HepG2 (cell line): ENCODE measurements at regions of chr2 and their contacts with region 1.

Region 1: DNA sequence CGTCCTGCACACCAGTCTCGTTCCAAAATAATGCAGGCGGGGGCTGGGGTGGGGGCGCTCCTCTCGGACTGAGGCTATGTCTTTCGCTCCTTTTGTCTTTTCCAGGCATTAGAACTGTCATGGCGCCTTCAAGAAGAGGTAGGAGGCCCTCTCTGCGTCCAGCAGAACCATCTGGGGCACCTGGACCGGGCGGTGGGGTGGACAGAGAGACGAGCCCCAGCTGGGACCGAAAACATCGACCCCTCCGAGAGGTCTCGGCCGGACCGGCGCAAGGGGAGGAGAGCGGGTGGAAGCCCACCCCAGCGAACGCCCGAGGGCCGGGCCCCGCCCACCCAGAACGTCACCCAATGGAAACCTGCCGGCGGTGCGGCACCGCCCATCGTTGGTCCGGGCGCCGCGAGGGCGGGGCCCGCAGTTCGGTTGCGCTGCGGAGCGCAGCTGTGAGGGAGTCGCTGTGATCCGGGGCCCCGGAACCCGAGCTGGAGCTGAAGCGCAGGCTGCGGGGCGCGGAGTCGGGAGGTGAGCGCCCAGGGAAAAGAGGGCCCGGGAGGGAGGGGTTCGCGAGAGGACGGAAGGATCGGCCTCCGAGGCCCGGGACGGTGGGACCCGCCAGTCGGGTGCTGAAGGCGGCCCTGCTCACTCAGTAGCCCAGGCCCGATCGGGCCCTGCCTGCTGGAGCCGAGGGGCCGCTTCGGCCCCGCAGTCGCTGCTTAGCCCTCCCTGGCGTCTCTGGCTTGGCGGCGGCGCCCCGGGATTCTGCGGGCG is at the start of gene NRBP1:
- DNase-seq: peak; percentile 91
- ATAC-seq: peak; percentile 90
- H3K4me3 ChIP-seq: peak within 1 kb of the TSS; percentile 86 to 100 (median 100)
- H3K27ac ChIP-seq: peak within 1 kb of the TSS; percentile 99
- H3K4me1 ChIP-seq: peaks cover 58% of the 10 kb centered on the region
- H3K27me3 ChIP-seq: no peaks in the 10 kb centered on the region; a peak in 1 of 5 replicates
- CTCF ChIP-seq: peak; percentile 52
- EP300 ChIP-seq: peak in 1 of 2 experiments; percentile 18; a peak in 2 of 4 replicates
- POLR2A ChIP-seq: peak; percentile 93 to 94
- RAD21 ChIP-seq: peak; percentile 64; the same call in 1 of the 2 replicates
- total RNA-seq, gene NRBP1: 165 and 222 TPM in 2 replicates

Region 2: DNA sequence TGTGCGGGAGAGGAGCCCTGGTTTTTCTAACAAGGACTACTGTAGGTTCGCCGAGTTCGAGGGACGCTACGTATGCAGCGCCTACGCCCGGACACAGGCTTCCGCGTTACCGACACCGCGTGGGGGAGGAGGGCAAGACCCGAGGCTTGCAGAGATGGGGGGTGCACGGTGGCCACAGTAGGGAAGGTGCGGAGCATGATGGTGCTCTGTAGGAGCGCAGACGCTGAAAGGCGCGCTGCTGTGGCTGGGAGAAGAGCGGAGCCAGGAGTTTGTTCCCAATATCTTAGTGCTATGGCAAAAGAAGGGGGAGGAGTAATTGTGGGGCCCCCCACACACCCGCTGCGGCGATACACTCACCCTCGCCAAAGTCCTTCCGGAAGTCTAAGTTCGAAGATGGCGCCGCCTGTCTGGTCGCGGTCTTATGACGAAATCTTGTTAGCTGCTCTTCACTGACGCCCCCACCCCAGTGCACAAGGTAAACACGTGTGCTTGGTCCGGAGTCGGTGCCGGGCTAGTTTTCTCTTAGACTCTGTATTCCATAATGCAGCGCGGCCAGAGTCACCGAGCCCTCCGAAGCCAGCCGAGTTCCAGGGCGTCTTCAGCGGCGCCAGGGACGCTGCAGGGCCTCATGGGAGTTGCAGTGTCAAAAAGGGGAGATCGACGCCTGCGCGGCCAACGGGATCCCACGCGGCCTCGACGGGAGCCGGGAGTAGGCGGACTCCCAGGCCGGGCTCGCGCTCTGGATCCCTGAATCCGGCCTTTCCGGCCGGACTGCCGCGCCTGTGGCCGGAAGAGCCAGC is 71.8 kb before region 1 on chr2 and contains the start of gene GTF3C2:
- CTCF ChIA-PET with region 1: no interaction called
- POLR2A ChIA-PET with region 1: interaction called, 10 read pairs
- in situ Hi-C with region 1: no loop called
- intact Hi-C with region 1: no loop called
- DNase-seq: peak; percentile 99
- ATAC-seq: peak; percentile 88
- H3K4me3 ChIP-seq: peak within 1 kb of the TSS; percentile 72 to 91 (median 85)
- H3K27ac ChIP-seq: peak within 1 kb of the TSS; percentile 96
- H3K4me1 ChIP-seq: peaks cover 64% of the 10 kb centered on the region
- H3K27me3 ChIP-seq: no peaks in the 10 kb centered on the region; a peak in 1 of 5 replicates
- CTCF ChIP-seq: 0 out of 2 replicates have a peak, but pooled peaks have one; percentile 25
- EP300 ChIP-seq: peak in 1 of 2 experiments; percentile 55; a peak in 3 of 4 replicates
- POLR2A ChIP-seq: peak; percentile 58 to 60
- RAD21 ChIP-seq: peak; percentile 45; the same call in 1 of the 2 replicates
- total RNA-seq, gene GTF3C2: 77.5 and 80.0 TPM in 2 replicates

Region 3: DNA sequence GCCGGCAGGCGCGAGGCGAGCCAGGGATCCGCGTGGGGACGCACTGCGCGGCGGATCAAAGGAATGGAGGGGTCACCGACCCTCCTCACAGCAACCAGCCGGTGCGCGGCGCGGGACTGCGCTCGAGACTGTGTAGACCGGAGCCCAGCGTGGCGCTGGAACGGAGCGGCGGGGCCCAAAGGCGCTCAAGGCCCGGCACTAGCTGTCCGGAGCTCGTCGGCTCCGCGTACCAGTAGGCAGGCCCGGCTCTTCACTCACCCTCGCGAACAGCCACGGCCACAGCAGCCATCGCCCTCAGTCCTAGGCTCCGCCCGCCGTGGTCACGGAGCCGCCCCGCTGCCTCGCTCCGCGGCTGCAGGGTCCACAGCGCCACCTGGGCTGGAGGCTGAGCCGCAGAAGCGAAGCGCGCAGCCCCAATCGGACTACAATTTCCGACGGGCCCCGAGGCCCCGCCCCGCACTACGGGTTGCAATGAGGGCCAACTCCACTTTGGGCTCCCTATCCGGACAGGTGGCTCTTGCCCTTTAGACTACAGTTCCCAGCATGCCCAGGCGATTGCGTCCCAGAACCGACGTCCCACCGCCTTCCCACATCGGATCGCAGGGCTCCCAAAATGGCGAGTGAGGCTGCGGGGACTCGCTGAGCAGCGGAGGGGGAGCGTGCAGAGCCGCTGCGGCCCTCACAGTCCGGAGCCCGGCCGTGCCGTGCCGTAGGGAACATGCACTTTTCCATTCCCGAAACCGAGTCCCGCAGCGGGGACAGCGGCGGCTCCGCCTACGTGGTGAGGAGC is 58.2 kb before region 1 on chr2 and contains the starts of genes EIF2B4 and SNX17:
- CTCF ChIA-PET with region 1: no interaction called
- POLR2A ChIA-PET with region 1: interaction called, 16 read pairs
- in situ Hi-C with region 1: no loop called
- intact Hi-C with region 1: loop called (anchors 1 kb)
- DNase-seq: peak; percentile 99
- ATAC-seq: peak; percentile 89
- H3K4me3 ChIP-seq: peak within 1 kb of the TSS; percentile 88 to 96 (median 95)
- H3K27ac ChIP-seq: peak within 1 kb of the TSS; percentile 83
- H3K4me1 ChIP-seq: peaks cover 41% of the 10 kb centered on the region
- H3K27me3 ChIP-seq: no peaks in the 10 kb centered on the region; a peak in 1 of 5 replicates
- CTCF ChIP-seq: peak; percentile 100
- EP300 ChIP-seq: peak; percentile 53 to 68
- POLR2A ChIP-seq: peak in 1 of 2 experiments; percentile 92; a peak in 2 of 4 replicates
- RAD21 ChIP-seq: peak; percentile 97
- total RNA-seq, gene EIF2B4: 91.5 and 105 TPM in 2 replicates
- total RNA-seq, gene SNX17: 94.9 and 109 TPM in 2 replicates

Region 4: GRCh38 chr2:27441958-27442919 is 13.8 kb after region 1 on chr2 and contains the start of gene KRTCAP3:
- CTCF ChIA-PET with region 1: no interaction called
- POLR2A ChIA-PET with region 1: interaction called, 11 read pairs
- in situ Hi-C with region 1: no loop called
- intact Hi-C with region 1: no loop called
- DNase-seq: no peak
- ATAC-seq: peak; percentile 10
- H3K4me3 ChIP-seq: no peak within 1 kb of the TSS
- H3K27ac ChIP-seq: no peak within 1 kb of the TSS
- H3K4me1 ChIP-seq: no peaks in the 10 kb centered on the region
- H3K27me3 ChIP-seq: no peaks in the 10 kb centered on the region
- CTCF ChIP-seq: no peak
- EP300 ChIP-seq: no peak
- POLR2A ChIP-seq: peak in 1 of 2 experiments; percentile 23; a peak in 1 of 4 replicates
- RAD21 ChIP-seq: no peak
- total RNA-seq, gene KRTCAP3: 2.1 TPM in 1 of 2 replicates, not detected in the other

Region 5: GRCh38 chr2:27489498-27490397 is 61.4 kb after region 1 on chr2 and contains the start of gene IFT172:
- CTCF ChIA-PET with region 1: no interaction called
- POLR2A ChIA-PET with region 1: interaction called, 4 read pairs
- in situ Hi-C with region 1: no loop called
- intact Hi-C with region 1: loop called (anchors 1 kb)
- DNase-seq: peak; percentile 100
- ATAC-seq: peak; percentile 91
- H3K4me3 ChIP-seq: peak within 1 kb of the TSS; percentile 69 to 79 (median 78)
- H3K27ac ChIP-seq: peak within 1 kb of the TSS; percentile 54
- H3K4me1 ChIP-seq: peaks cover 41% of the 10 kb centered on the region
- H3K27me3 ChIP-seq: no peaks in the 10 kb centered on the region; a peak in 1 of 5 replicates
- CTCF ChIP-seq: no peak
- EP300 ChIP-seq: no peak
- POLR2A ChIP-seq: peak; percentile 83 to 87
- RAD21 ChIP-seq: no peak; the same call in 1 of the 2 replicates
- total RNA-seq, gene IFT172: 17.0 and 21.6 TPM in 2 replicates

Region 6: GRCh38 chr2:27582695-27583389 is 154.4 kb after region 1 on chr2 and contains the start of gene ZNF512:
- CTCF ChIA-PET with region 1: no interaction called
- POLR2A ChIA-PET with region 1: interaction called, 16 read pairs
- in situ Hi-C with region 1: no loop called
- intact Hi-C with region 1: no loop called
- DNase-seq: peak; percentile 96
- ATAC-seq: peak; percentile 98
- H3K4me3 ChIP-seq: peak within 1 kb of the TSS; percentile 69 to 97 (median 87)
- H3K27ac ChIP-seq: peak within 1 kb of the TSS; percentile 57
- H3K4me1 ChIP-seq: peaks cover 50% of the 10 kb centered on the region
- H3K27me3 ChIP-seq: no peaks in the 10 kb centered on the region; a peak in 1 of 5 replicates
- CTCF ChIP-seq: peak; percentile 25; the same call in 1 of the 2 replicates
- EP300 ChIP-seq: no peak; a peak in 1 of 4 replicates
- POLR2A ChIP-seq: peak; percentile 87 to 88
- RAD21 ChIP-seq: 0 out of 2 replicates have a peak, but pooled peaks have one; percentile 41
- total RNA-seq, gene ZNF512: 31.0 and 38.1 TPM in 2 replicates

Region 7: GRCh38 chr2:27628767-27629709 is 200.6 kb after region 1 on chr2 and contains the starts of genes CCDC121 and GPN1:
- CTCF ChIA-PET with region 1: no interaction called
- POLR2A ChIA-PET with region 1: interaction called, 14 read pairs
- in situ Hi-C with region 1: no loop called
- intact Hi-C with region 1: no loop called
- DNase-seq: peak; percentile 88
- ATAC-seq: peak; percentile 98
- H3K4me3 ChIP-seq: peak within 1 kb of the TSS; percentile 83 to 99 (median 97)
- H3K27ac ChIP-seq: peak within 1 kb of the TSS; percentile 65
- H3K4me1 ChIP-seq: peaks cover 24% of the 10 kb centered on the region
- H3K27me3 ChIP-seq: no peaks in the 10 kb centered on the region; a peak in 1 of 5 replicates
- CTCF ChIP-seq: 0 out of 2 replicates have a peak, but pooled peaks have one; percentile 23
- EP300 ChIP-seq: peak in 1 of 2 experiments; percentile 37; a peak in 1 of 4 replicates
- POLR2A ChIP-seq: peak; percentile 94 to 97
- RAD21 ChIP-seq: peak; percentile 27; the same call in 1 of the 2 replicates
- total RNA-seq, gene CCDC121: 3.0 and 3.8 TPM in 2 replicates
- total RNA-seq, gene GPN1: 62.7 and 98.5 TPM in 2 replicates